A549 (cell line): ENCODE measurements at regions of chr12 and their contacts with region 1.

Region 1: DNA sequence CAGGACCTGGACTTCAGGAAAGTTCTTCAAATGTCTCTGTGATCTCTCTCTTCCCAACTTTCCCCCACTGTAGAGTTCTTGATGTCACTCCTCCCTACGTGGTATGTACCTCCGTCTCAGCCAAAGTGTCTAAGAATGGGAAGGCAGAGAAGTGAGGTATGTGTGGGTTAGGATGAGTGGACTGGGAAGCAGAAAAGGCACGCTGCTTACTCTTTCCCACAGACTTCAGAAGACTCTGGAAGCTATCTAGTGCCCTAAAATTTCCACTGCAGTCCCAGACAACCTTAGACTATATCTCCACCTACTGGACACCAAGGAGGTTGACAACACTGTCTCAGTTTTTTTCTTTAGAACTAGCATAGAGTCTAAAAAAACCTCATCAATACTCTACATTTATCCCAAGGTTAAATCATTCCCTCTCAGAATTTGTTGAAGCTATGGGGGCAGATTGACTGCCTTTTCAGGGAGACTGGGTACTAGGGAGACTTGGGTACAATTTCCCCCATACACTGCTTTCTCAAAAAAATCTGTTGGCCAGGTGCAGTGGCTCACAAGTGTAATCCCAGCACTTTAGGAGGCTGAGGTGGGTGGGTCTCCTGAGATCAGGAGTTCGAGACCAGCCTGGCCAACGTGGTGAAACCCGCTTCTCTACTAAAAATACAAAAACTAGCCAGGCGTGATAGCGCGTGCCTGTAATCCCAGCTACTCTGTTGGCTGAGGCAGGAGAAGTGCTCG is 20.6 kb upstream of the ITGA5 start:
- DNase-seq: peak; percentile 69 to 83
- ATAC-seq: peak; percentile 87
- H3K4me3 ChIP-seq: no peak overlapping the region
- H3K27ac ChIP-seq: peak overlapping the region in 1 of 2 experiments; percentile 23; a peak in 1 of 6 replicates
- H3K4me1 ChIP-seq: peaks cover 14% of the 10 kb centered on the region
- CTCF ChIP-seq: peak; percentile 96
- EP300 ChIP-seq: no peak
- POLR2A ChIP-seq: no peak
- RAD21 ChIP-seq: peak; percentile 94 to 99

Region 2: DNA sequence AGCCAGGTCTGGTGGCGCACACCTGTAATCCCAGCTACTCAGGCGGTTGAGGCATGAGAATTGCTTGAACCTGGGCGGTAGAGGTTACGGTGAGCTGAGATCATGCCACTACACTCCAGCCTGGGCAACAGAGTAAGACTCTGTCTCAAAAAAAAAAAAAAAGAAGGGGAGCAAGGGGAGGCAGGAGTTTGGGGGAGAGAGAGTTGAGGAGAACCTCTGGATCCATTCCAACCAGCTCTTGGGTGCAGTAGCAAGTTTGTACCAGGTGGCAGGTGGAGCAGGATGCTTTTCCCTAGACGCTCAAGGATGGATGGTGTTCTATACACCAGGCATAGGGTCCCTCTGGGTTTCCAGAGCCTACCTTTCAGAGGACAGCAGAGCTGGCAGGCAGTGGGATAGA is 140.8 kb before region 1 on chr12:
- CTCF ChIA-PET with region 1: no interaction called
- POLR2A ChIA-PET with region 1: no interaction called
- DNase-seq: no peak
- ATAC-seq: no peak
- H3K4me3 ChIP-seq: no peak overlapping the region
- H3K27ac ChIP-seq: no peak overlapping the region
- H3K4me1 ChIP-seq: peaks cover 23% of the 10 kb centered on the region
- CTCF ChIP-seq: no peak
- EP300 ChIP-seq: no peak
- POLR2A ChIP-seq: no peak
- RAD21 ChIP-seq: no peak

Region 3: DNA sequence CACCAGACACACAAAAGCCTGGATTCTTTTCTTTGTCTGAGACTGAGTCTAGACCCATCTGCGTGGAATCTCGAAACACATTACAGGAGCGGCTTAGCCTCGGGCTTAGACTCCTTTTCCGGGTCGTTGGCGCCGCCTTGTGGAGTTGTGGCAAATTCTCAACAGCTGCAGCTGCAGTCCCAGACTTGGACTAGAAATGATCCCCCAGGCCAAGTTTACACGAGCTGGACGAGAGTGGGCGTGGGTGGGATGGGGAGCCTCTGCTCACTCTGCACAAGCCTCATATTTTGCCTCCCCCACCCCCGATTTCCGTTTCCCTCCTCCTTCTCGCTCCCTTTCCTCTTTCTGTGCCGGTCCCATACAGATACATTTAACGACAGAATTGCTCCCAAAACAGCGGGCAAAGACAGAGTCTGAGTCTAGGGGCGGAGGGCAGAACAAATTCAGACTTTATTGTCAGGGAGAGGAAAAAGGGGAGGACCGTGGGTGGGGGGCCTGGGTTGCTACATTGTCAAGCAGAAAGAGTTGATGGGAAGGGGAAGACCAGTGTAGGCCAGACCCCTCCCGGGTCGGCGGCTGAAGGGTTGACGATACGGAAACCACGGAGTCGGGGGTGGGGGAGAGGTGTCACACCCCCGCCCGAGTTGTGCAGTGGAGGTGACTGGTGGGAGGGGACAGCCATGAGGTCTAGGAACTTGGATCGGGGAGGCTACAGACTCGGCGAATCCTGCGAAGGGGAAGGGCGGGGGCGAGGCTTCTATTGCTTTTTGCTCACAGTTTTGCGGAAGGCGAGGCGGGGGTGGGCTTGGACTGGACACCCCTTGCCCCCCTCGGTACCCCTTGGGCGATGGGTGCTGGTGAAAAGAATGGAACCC is 70.7 kb before region 1 on chr12:
- CTCF ChIA-PET with region 1: interaction called, 22 read pairs
- POLR2A ChIA-PET with region 1: no interaction called
- DNase-seq: peak; percentile 82 to 87
- ATAC-seq: peak; percentile 63 to 78
- H3K4me3 ChIP-seq: no peak overlapping the region
- H3K27ac ChIP-seq: peak overlapping the region; percentile 46 to 84
- H3K4me1 ChIP-seq: peaks cover 52% of the 10 kb centered on the region
- CTCF ChIP-seq: peak; percentile 91
- EP300 ChIP-seq: no peak
- POLR2A ChIP-seq: no peak
- RAD21 ChIP-seq: peak; percentile 86 to 94

Region 4: GRCh38 chr12:54388235-54389138 is 51.2 kb before region 1 on chr12:
- CTCF ChIA-PET with region 1: interaction called, 77 read pairs
- POLR2A ChIA-PET with region 1: no interaction called
- DNase-seq: no peak
- ATAC-seq: no peak
- H3K4me3 ChIP-seq: no peak overlapping the region
- H3K27ac ChIP-seq: no peak overlapping the region
- H3K4me1 ChIP-seq: peaks cover 22% of the 10 kb centered on the region; the same call in 2 of the 3 replicates
- CTCF ChIP-seq: no peak
- EP300 ChIP-seq: no peak
- POLR2A ChIP-seq: no peak
- RAD21 ChIP-seq: no peak

Region 5: GRCh38 chr12:54398995-54399793 is 40.5 kb before region 1 on chr12:
- CTCF ChIA-PET with region 1: interaction called, 1,279 read pairs
- POLR2A ChIA-PET with region 1: interaction called, 15 read pairs
- DNase-seq: peak; percentile 85 to 96
- ATAC-seq: peak; percentile 82 to 94
- H3K4me3 ChIP-seq: no peak overlapping the region
- H3K27ac ChIP-seq: no peak overlapping the region
- H3K4me1 ChIP-seq: no peaks in the 10 kb centered on the region
- CTCF ChIP-seq: peak; percentile 96
- EP300 ChIP-seq: no peak
- POLR2A ChIP-seq: no peak
- RAD21 ChIP-seq: peak; percentile 95 to 99

Region 6: GRCh38 chr12:54404061-54405004 is 35.4 kb before region 1 on chr12:
- CTCF ChIA-PET with region 1: interaction called, 1,279 read pairs
- POLR2A ChIA-PET with region 1: interaction called, 15 read pairs
- DNase-seq: peak in 1 of 2 experiments; percentile 66
- ATAC-seq: peak in 1 of 2 experiments; percentile 71; a peak in 3 of 6 replicates
- H3K4me3 ChIP-seq: no peak overlapping the region
- H3K27ac ChIP-seq: no peak overlapping the region
- H3K4me1 ChIP-seq: no peaks in the 10 kb centered on the region
- CTCF ChIP-seq: peak; percentile 74
- EP300 ChIP-seq: no peak
- POLR2A ChIP-seq: no peak
- RAD21 ChIP-seq: peak in 1 of 2 experiments; percentile 39; a peak in 2 of 5 replicates

Region 7: DNA sequence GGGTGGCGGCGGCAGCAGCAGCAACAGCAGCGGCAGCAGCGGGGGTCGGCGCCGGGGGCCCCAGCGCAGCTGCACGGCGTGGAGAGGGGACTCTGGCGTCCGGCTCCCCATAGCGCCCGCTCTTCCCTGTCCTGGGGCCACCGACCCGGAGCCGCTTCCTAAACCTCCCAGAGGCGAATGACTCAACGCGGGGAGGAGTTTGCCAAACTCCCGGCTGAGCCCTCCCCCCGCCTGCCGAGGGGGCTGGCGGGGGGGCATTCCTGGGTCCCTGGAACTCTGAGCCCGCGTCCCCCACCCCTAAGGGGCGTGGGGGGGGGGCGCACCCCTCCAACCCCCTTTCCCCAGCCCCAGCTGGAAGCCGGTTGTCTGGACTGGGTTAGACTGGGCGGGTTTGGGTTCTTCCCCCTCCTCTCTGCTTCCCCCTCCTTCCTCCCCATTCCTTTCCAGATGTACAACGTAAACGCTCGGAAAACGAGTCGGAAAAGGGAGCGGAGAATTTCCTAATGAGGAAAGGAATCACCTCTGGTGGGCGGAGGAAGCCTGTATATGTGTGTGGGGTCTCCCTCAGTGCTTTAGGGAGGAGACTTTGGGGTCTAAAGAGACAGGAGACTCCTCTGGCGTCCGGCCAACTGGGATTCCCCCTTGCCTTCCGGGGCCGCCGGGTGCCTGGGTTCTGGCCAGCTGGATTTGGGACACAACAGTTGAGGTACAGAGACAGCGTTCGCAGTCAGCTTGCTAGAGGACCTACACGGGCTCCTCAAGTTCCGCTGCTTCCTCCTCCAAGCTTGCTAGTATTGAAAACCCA is 20.4 kb before region 1 on chr12 and contains the start of gene ITGA5:
- CTCF ChIA-PET with region 1: interaction called, 209 read pairs
- POLR2A ChIA-PET with region 1: no interaction called
- DNase-seq: peak; percentile 53 to 90
- ATAC-seq: peak; percentile 70 to 82
- H3K4me3 ChIP-seq: peak within 1 kb of the TSS; percentile 77
- H3K27ac ChIP-seq: peak within 1 kb of the TSS; percentile 94 to 99
- H3K4me1 ChIP-seq: peaks cover 71% of the 10 kb centered on the region
- CTCF ChIP-seq: no peak
- EP300 ChIP-seq: no peak
- POLR2A ChIP-seq: peak; percentile 68
- RAD21 ChIP-seq: no peak
- polyA plus RNA-seq, gene ITGA5: 31.7 and 36.1 TPM in 2 replicates